ENCODE measurements at regions of chr10 and their contacts with region 1.

Region 1: DNA sequence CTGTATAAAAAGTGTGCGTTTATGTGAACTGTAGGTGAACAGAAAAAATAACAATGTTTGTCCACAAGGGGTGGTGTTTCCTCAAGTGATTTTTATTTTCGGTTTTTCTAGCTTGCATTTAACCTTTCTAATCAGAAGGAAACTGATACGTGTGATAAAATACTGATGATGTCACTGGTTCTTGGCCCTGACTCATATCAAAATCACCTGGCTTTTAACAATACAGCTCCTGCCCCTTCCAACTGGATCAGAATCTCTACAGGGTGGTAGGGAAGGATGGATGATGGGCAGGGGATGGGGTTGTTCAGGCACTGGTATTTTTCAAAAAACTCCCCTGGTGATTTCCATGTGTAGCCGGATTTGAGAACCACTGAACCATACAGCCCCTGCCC is 10.9 kb downstream of the NPFFR1 start:
- DNase-seq: no peak
- ATAC-seq: peak; percentile 79
- H3K4me3 ChIP-seq: no peak overlapping the region
- H3K27ac ChIP-seq: no peak overlapping the region
- H3K4me1 ChIP-seq: peaks cover 0 to 16% of the 10 kb centered on the region in 2 experiments; a peak in 3 of 4 replicates
- H3K27me3 ChIP-seq: no peaks in the 10 kb centered on the region
- CTCF ChIP-seq: peak; percentile 34 to 73 (median 38); a peak in 5 of 6 replicates
- POLR2A ChIP-seq: no peak
- RAD21 ChIP-seq: peak; percentile 59

Region 2: DNA sequence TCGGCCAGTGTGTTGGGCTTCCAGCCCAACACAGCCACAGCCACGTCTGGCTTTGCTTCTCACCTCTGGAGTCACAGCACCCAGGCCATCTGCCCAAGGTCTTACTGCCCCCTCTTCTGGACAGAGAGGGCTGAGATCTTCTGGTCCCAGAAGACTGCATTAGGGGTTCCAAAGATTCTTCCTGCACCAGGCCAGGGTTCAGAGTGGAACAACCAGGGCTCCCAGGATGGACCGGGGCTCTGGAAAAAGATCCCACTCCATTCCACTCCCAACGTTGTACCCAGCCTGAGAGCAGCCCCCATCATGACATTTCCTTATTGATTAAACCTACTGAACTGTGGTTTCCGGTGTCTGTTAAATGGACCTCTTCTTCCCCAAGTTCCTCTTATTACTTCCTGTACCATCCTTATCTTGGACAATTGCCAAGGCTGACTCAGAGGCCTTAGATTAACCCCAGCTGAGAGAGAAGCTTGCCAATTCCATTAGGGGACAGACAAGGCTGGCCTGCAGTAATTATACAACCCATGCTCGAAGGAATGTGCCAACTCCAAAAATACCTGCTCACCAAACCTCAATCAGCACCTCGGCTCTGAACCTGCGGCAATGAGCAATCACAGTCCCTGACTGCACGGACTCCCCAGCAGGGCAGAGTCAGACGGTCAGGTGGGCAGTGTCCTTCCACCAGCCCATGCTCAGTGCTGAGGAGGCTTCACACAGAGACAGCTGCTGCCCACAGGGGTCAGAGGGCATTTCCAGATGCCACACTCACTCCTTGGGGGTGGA is 58.8 kb after region 1 on chr10:
- CTCF ChIA-PET with region 1: no interaction called
- POLR2A ChIA-PET with region 1: no interaction called
- RAD21 ChIA-PET with region 1: no interaction called
- intact Hi-C with region 1: loop called (anchors 5 kb)
- DNase-seq: peak; percentile 96
- ATAC-seq: peak; percentile 87
- H3K4me3 ChIP-seq: peak overlapping the region in 1 of 2 experiments; percentile 35; a peak in 2 of 4 replicates
- H3K27ac ChIP-seq: peak overlapping the region; percentile 43
- H3K4me1 ChIP-seq: peaks cover 24 to 29% of the 10 kb centered on the region in 2 experiments
- H3K27me3 ChIP-seq: no peaks in the 10 kb centered on the region
- CTCF ChIP-seq: peak; percentile 49 to 62 (median 54); a peak in 5 of 6 replicates
- POLR2A ChIP-seq: no peak
- RAD21 ChIP-seq: peak; percentile 76

Region 3: DNA sequence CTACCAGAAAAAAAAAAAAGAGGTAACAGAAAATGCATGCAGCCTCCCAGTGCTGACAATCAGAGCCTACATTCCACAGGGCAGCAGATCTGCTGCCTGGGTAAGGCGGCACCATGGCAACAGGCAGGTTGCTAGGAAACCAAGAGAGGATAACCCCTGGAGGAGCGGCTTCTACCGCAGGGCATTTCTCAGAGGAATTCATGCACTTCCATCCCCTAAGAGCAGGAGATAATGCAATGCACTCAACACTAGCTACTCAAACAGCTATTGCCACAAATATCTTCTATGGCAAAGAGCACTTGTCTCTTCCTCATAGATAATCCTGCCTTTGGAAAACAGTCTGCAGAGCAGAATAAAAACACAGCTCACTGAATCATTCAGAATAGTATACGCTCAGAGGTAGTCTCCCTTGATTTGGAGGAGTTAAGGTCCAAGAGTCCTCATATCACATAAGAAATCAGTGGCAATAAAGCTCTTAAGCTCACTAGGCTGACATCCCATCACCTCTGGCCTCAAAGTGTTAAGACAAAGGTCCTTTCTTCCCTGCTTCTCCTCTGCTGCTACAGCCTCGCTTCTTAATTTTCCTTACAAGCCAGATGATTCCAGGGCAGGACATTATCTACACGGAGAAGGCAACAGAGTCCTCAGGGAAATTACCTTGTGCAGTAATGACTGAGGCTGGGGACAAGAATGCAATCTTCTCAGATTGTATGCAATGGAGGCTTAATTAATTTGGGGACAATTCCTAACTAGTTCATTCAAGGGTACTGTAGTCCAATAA is 1567.4 kb after region 1 on chr10:
- CTCF ChIA-PET with region 1: no interaction called
- POLR2A ChIA-PET with region 1: no interaction called
- RAD21 ChIA-PET with region 1: no interaction called
- intact Hi-C with region 1: no loop called
- DNase-seq: no peak
- ATAC-seq: peak; percentile 55
- H3K4me3 ChIP-seq: no peak overlapping the region
- H3K27ac ChIP-seq: no peak overlapping the region
- H3K4me1 ChIP-seq: peaks cover 18 to 43% of the 10 kb centered on the region in 2 experiments
- H3K27me3 ChIP-seq: no peaks in the 10 kb centered on the region
- CTCF ChIP-seq: no peak
- POLR2A ChIP-seq: no peak
- RAD21 ChIP-seq: no peak

Measured in HCT116 (cell line).